ENCODE measurements at regions of chrX and their contacts with region 1.

Region 1: GRCh38 chrX:150982788-150983520 is at the start of gene HMGB3:
- DNase-seq: peak; percentile 81
- H3K4me3 Mint-ChIP-seq: peak within 1 kb of the TSS; percentile 63
- H3K27ac Mint-ChIP-seq: no peak within 1 kb of the TSS
- H3K4me1 Mint-ChIP-seq: peaks cover 16% of the 10 kb centered on the region
- H3K27me3 Mint-ChIP-seq: no peaks in the 10 kb centered on the region
- total RNA-seq, gene HMGB3: 52.6 and 60.8 TPM in 2 replicates

Region 2: DNA sequence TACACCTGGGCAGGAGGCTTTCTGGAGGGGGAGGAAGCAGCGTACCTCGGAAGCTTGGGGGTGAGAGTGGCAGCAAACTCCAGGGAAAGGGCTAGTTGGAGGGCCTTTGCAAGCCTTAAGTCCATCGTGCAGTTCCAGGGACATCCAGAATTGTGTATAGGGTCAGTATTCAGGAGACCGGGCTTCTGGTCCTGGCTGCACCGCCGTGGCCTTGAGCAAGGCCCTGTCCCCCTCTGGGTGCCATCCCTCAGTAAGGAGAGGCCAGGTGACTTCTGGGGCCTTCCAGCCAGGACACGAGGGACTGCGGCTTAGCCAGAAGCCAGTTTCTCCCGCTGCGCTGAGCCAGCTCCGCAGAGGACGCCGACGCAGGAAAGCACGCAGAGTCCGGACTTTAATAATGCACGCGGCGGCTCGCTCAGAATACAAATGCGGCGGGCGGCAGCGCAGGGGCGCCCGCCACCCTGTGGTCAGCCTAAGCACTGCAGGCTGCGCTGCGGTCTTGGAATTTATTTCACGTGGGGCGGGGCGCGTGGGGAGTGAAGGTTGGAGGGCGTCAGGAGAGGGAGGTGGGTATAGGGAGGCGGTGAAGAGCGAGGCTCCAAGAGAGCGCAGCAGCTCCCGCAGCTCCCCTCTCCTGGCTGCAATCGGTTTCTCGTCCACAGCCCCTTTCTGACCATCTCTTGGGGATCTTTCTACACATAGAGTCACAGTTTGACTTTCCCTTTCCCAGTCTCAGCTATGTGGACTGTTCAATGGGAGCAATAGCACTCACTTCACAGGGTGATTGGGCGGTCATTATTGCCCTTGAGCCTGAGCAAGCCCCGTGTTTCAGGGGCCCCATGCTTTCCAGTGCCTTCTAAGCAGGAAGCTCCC is 99.4 kb after region 1 on chrX:
- intact Hi-C with region 1: no loop called
- DNase-seq: peak; percentile 39
- H3K4me3 Mint-ChIP-seq: no peak overlapping the region
- H3K27ac Mint-ChIP-seq: no peak overlapping the region
- H3K4me1 Mint-ChIP-seq: no peaks in the 10 kb centered on the region
- H3K27me3 Mint-ChIP-seq: peaks cover 22% of the 10 kb centered on the region

Region 3: DNA sequence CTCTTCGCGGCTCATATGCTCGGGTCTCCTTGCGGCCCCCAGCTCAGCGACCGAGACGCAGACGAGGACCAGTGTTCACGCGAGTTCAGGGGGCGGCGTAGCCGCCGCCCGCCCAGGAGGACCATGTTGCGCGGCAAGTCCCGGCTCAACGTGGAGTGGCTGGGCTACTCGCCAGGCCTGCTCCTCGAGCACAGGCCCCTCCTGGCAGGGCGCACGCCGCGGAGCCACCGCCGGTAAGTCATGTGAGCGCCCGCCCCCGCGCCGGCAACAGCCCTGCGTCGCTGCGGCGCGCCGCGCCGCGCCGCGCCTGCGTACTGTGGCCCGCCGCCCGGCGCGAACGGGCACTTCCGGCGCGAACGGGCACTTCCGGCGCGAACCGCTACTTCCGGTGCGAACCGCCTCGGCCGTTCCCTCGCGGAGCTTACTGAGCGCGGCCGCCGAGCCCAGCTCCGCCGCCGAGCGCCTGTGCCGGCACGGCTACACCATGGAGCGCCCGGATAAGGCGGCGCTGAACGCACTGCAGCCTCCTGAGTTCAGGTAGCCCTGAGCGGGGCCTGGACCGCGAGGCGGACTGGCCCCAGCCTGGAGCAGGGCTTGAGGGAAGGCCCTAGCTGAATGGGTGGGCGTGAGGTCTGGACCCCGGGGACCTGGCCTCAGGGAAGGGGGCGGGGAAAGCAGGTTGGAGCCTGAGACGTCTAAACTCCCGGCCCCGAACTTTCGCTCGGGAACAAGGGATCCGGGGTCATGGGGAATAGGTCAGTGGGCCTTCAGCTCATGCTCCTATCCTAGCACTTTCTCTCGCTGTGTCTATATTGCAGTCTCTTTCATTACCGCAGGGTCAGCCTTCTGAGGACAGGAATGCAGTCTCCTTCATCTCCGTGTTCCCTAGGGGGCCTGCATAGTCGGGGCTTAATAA is 414.1 kb after region 1 on chrX and contains the start of gene VMA21:
- intact Hi-C with region 1: loop called (anchors 5 kb)
- DNase-seq: peak; percentile 76
- H3K4me3 Mint-ChIP-seq: peak within 1 kb of the TSS; percentile 87
- H3K27ac Mint-ChIP-seq: peak within 1 kb of the TSS; percentile 89
- H3K4me1 Mint-ChIP-seq: peaks cover 36% of the 10 kb centered on the region
- H3K27me3 Mint-ChIP-seq: no peaks in the 10 kb centered on the region
- total RNA-seq, gene VMA21: 40.8 and 43.1 TPM in 2 replicates

Measured in activated T-helper 2 cell treated with anti-CD3 and anti-CD28 coated beads, Interferon-gamma antibody, Interleukin-2, Interleukin-4, amounts not matched to agents 10 μg/mL and 5 μg/mL and 100 μg/mL, durations not matched to agents 14 hours and 24 hours and 36 hours (primary cell).